GM10248 (cell line): ENCODE measurements at regions of chr7 and their contacts with region 1.

Region 1: DNA sequence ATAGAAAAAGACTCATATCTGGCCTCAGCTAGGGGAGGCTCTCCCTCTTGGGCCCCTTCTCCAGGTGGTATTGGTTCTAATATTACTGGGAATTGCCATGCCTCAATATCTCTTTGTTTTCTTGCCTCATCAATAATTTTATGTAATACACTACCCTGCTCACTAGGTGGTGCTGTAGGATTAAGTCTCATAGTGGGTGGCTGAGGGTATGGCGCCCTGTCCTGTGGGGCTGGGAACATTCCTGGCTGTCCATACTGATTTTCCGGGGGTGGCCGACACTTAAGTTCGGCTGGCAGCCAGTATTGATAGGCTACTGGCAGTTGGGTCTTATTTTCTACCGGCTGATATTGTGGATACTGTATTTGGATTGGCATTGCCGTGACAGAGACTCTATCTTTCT is 9.0 kb upstream of the TAS2R3 start:
- DNase-seq: no peak
- CTCF ChIP-seq: peak; percentile 35

Region 2: DNA sequence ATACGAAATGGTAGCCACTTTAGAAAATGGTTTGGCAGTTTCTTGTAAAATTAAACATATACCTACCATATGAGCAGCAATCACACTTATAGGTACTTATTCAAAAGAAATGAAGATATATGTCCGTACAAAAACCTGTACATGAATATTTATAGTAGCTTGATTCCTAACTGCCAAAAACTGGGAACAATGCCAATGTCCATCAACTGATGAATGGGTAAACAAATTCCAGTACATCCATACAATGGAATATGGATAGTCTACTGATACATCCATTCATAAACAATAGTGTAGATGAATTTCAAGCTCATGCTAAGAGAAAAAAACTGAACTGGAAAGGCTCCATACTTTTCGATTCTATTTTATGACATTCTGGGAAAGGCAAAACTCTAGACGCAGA is 135.2 kb before region 1 on chr7:
- CTCF ChIA-PET with region 1: no interaction called
- POLR2A ChIA-PET with region 1: no interaction called
- DNase-seq: no peak
- CTCF ChIP-seq: no peak

Region 3: GRCh38 chr7:141785706-141786552 is 31.0 kb after region 1 on chr7:
- CTCF ChIA-PET with region 1: interaction called, 12 read pairs
- POLR2A ChIA-PET with region 1: no interaction called
- DNase-seq: peak; percentile 62
- CTCF ChIP-seq: peak; percentile 85